ENCODE measurements at regions of chr3 and their contacts with region 1.

Region 1: GRCh38 chr3:42701142-42702065 is 1.2 kb downstream of the HHATL start:
- DNase-seq: peak; percentile 79
- ATAC-seq: peak; percentile 67 to 74

Region 2: DNA sequence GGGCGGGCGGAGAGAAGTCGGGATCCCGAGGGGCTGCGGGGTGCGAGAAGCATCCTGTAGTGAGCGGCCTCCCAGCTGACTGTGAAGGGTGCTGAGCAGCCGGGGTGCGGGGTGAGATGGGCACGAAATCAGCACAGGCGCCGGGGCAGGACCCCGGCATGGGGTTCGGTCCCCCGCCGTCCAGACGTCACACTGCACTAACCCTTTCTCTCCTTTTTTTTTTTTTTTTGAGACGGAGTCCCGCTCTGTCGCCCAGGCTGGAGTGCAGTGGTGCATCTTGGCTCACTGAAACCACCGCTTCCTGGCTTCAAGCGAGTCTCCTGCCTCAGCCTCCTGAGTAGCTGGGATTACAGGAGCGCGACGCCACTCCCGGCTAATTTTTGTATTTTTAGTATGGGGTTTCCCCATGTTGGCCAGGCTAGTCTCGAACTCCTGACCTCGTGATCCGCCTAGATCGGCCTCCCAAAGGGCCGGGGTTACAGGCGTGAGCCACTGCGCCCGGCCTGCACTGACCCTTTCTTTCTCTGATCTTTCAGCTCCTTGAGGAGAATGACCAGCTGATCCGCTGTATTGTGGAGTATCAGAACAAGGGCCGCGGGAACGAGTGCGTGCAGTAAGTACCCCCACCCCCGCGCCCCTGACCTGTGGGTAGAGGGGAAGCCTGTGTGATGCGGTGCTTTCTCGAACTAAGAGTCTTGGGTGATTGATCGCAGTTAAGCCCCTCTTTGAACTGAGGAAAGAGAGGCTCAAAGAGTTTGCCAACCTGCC is 110.2 kb before region 1 on chr3:
- intact Hi-C with region 1: no loop called
- DNase-seq: no peak
- ATAC-seq: peak in 1 of 2 donors; percentile 28

Region 3: DNA sequence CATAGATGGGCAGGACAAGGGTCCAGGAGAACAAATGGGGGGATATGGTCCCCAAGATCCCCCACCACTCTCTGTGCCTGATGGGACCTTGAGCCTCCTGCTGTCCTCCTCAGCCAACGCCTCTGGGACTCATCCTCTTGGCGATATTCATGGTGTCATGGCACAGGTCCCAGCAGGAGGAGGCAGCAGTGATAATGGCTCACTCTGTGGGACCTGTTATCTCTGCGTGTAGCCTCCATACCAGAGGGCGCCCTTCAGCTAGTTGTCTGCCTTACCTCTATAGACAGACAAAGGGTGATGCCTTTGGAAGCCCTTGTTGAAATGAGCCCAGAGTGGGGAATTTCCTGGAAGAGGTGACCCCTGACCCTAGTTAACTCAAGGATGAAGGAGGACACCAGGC is 40.5 kb before region 1 on chr3:
- intact Hi-C with region 1: loop called in 1 of 2 experiments (anchors 5 kb)
- DNase-seq: peak; percentile 63
- ATAC-seq: peak; percentile 44 to 63

Region 4: GRCh38 chr3:42721690-42722089 is 20.3 kb after region 1 on chr3:
- intact Hi-C with region 1: loop called in 1 of 2 experiments (anchors 2 kb)
- DNase-seq: no peak
- ATAC-seq: no peak

Measured in left cardiac atrium (tissue), 4 donors.